ENCODE measurements at regions of chr1 and their contacts with region 1.

Region 1: DNA sequence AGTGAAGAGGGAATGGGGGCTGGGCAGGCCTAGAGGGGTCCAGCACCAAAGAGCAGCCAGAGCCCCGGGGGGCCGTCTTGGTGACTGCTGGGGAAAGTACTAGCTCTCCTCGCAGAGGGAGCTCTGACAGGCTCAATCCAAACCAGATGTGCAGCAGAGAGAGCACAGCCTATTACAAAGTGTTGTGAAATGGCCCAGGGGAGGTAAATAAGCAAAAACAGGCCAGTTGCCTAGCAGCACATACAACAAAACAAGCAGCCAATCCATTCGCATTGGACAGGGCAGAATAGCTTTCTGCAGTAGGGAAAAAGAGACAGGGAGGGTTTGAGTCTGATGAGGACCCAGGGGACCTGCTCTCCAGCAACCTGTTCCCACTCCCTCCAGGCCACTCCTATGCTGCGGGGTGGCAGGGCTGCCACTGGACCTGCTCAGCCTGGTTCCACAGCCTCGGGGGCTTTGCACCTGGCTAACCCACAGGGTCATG is 239.6 kb upstream of the FGGY start:
- DNase-seq: peak; percentile 77
- H3K4me3 Mint-ChIP-seq: no peak overlapping the region
- H3K27ac Mint-ChIP-seq: peak overlapping the region; percentile 50
- H3K4me1 Mint-ChIP-seq: peaks cover 21% of the 10 kb centered on the region
- H3K27me3 Mint-ChIP-seq: no peaks in the 10 kb centered on the region
- CTCF ChIP-seq: no peak

Region 2: DNA sequence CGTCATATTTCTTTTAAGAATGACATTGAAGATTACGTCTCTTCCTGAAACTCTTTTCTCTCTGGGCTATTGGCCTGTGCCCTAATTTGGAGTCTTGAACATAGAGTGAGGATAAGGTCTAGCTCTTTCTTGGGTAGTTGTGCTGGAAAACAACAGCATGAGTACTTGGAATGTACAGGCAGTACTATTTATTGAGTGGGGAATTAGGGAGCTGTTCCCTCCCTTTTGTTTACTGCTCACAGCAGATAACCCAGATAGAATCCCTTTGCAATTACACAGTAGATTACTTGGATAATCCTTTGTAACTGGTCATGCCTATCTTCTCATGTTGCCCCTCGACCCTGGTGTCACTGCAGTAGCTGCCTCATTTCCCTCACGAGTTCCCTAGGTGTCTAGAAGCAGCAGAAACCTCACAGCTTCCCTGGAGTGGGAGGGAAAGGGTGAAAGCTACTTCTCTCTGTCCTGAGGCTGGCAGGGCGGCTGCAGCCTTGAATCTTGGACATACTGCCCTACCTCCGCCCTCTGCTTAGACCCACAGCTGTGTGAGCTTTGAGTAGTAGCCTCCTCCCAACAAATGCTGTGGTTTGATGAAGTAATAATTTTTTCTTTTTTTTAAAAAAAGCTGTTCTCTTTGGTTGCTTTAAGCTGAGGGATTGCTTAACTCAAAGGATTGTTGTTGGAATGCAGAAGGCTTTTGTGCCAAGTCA is 310.2 kb after region 1 on chr1:
- CTCF ChIA-PET with region 1: no interaction called
- POLR2A ChIA-PET with region 1: no interaction called
- intact Hi-C with region 1: loop called (anchors 10 kb)
- DNase-seq: peak; percentile 75
- H3K4me3 Mint-ChIP-seq: peak overlapping the region; percentile 35
- H3K27ac Mint-ChIP-seq: peak overlapping the region; percentile 86
- H3K4me1 Mint-ChIP-seq: peaks cover 42% of the 10 kb centered on the region
- H3K27me3 Mint-ChIP-seq: no peaks in the 10 kb centered on the region
- CTCF ChIP-seq: no peak